K562 (cell line): ENCODE measurements at regions of chr1 and their contacts with region 1.

Region 1: GRCh38 chr1:2801535-2802291 is at the start of gene TTC34:
- DNase-seq: peak; percentile 76 to 90 (median 89)
- ATAC-seq: peak; percentile 99
- H3K4me3 ChIP-seq: no peak within 1 kb of the TSS
- H3K27ac ChIP-seq: no peak within 1 kb of the TSS
- H3K4me1 ChIP-seq: peaks cover 0 to 34% of the 10 kb centered on the region in 2 experiments; a peak in 1 of 5 replicates
- H3K27me3 ChIP-seq: peaks cover 0 to 27% of the 10 kb centered on the region in 2 experiments; a peak in 3 of 5 replicates
- CTCF ChIP-seq: peak; percentile 78 to 90 (median 89)
- EP300 ChIP-seq: no peak
- POLR2A ChIP-seq: no peak
- RAD21 ChIP-seq: peak; percentile 56 to 80; a peak in 3 of 4 replicates
- polyA plus RNA-seq, gene TTC34: not detected

Region 2: GRCh38 chr1:2108213-2108876 is 693.4 kb before region 1 on chr1:
- CTCF ChIA-PET with region 1: no interaction called
- POLR2A ChIA-PET with region 1: no interaction called
- in situ Hi-C with region 1: loop called (anchors 5 kb)
- intact Hi-C with region 1: no loop called
- DNase-seq: peak; percentile 80 to 85 (median 84)
- ATAC-seq: peak; percentile 90
- H3K4me3 ChIP-seq: no peak overlapping the region
- H3K27ac ChIP-seq: no peak overlapping the region
- H3K4me1 ChIP-seq: peaks cover 0 to 58% of the 10 kb centered on the region in 2 experiments; a peak in 3 of 5 replicates
- H3K27me3 ChIP-seq: peaks cover 68 to 97% of the 10 kb centered on the region in 2 experiments; a peak in 4 of 5 replicates
- CTCF ChIP-seq: peak; percentile 68 to 85 (median 72)
- EP300 ChIP-seq: no peak
- POLR2A ChIP-seq: no peak
- RAD21 ChIP-seq: peak in 1 of 2 experiments; percentile 41; a peak in 2 of 4 replicates

Region 3: DNA sequence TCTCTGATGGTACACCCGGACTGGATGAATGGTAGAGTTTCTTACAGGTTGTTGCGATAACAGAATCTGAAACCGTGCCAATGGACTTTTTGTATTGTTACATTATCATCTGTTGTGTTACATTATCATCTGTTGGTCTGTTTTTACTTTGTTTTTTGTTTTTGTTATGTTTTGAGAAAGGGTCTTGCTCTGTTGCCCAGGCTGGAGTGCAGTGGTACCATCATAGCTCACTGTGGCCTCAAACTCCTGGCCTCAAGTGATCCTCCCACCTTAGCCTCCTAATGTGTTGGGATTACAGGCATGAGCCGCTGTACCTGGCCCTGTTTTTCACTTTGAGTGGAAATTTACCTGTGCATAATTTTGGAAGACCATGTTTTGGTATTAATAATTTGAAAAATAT is 379.2 kb before region 1 on chr1:
- CTCF ChIA-PET with region 1: no interaction called
- POLR2A ChIA-PET with region 1: interaction called, 3 read pairs
- in situ Hi-C with region 1: loop called (anchors 5 kb)
- intact Hi-C with region 1: no loop called
- DNase-seq: no peak
- ATAC-seq: no peak
- H3K4me3 ChIP-seq: no peak overlapping the region
- H3K27ac ChIP-seq: no peak overlapping the region
- H3K4me1 ChIP-seq: peaks cover 0 to 29% of the 10 kb centered on the region in 2 experiments; a peak in 2 of 5 replicates
- H3K27me3 ChIP-seq: peaks cover 37 to 60% of the 10 kb centered on the region in 2 experiments; a peak in 4 of 5 replicates
- CTCF ChIP-seq: no peak
- EP300 ChIP-seq: no peak
- POLR2A ChIP-seq: no peak
- RAD21 ChIP-seq: no peak

Region 4: DNA sequence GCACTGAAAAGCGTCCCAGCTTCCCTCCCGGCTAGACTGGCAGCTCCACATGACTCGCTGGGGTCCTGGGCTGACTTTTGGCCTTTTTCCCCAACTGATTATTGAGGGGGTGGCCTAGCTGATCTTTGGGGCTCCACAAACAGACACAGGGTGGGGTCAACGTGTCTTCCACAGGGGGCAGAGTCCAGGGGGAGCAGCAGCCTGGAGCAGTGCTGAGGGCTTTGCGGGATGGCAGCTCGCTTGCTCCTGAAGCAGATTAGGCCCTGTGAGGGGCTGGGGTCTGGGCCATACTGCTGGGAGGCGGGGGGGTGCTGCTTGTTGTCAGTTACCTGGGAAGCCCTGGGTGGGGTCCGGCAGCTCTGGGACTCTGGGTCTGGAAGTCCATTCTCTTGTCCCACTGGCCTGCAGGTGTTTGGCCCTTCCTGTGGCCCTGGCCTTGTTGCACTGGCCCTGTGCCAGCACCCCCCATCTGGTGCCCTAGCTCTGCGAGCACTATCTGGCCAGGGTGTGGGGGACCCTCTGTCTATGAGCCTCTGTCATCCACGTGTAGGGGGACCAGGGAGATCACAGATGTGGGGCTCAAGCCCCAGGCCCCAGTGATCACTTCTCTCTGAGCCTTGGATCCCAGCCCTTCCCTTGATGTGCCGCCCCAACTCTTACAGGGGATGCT is 259.3 kb before region 1 on chr1:
- CTCF ChIA-PET with region 1: no interaction called
- POLR2A ChIA-PET with region 1: no interaction called
- in situ Hi-C with region 1: no loop called
- intact Hi-C with region 1: no loop called
- DNase-seq: no peak
- ATAC-seq: no peak
- H3K4me3 ChIP-seq: no peak overlapping the region
- H3K27ac ChIP-seq: peak overlapping the region; percentile 63
- H3K4me1 ChIP-seq: peaks cover 56 to 86% of the 10 kb centered on the region in 2 experiments
- H3K27me3 ChIP-seq: peaks cover 0 to 9% of the 10 kb centered on the region in 2 experiments; a peak in 2 of 5 replicates
- CTCF ChIP-seq: no peak
- EP300 ChIP-seq: no peak
- POLR2A ChIP-seq: no peak
- RAD21 ChIP-seq: no peak

Region 5: GRCh38 chr1:2566101-2567045 is 235.3 kb before region 1 on chr1:
- CTCF ChIA-PET with region 1: no interaction called
- POLR2A ChIA-PET with region 1: no interaction called
- in situ Hi-C with region 1: no loop called
- intact Hi-C with region 1: no loop called
- DNase-seq: no peak
- ATAC-seq: peak; percentile 13; the same call in 2 of the 3 replicates
- H3K4me3 ChIP-seq: no peak overlapping the region
- H3K27ac ChIP-seq: no peak overlapping the region
- H3K4me1 ChIP-seq: peaks cover 0 to 46% of the 10 kb centered on the region in 2 experiments; a peak in 2 of 5 replicates
- H3K27me3 ChIP-seq: peaks cover 37 to 61% of the 10 kb centered on the region in 2 experiments
- CTCF ChIP-seq: no peak
- EP300 ChIP-seq: no peak
- POLR2A ChIP-seq: no peak
- RAD21 ChIP-seq: no peak

Region 6: GRCh38 chr1:2778220-2778592 is 23.5 kb before region 1 on chr1:
- CTCF ChIA-PET with region 1: no interaction called
- POLR2A ChIA-PET with region 1: no interaction called
- in situ Hi-C with region 1: no loop called
- intact Hi-C with region 1: no loop called
- DNase-seq: no peak
- ATAC-seq: no peak
- H3K4me3 ChIP-seq: no peak overlapping the region
- H3K27ac ChIP-seq: no peak overlapping the region
- H3K4me1 ChIP-seq: no peaks in the 10 kb centered on the region
- H3K27me3 ChIP-seq: no peaks in the 10 kb centered on the region
- CTCF ChIP-seq: no peak
- EP300 ChIP-seq: no peak
- POLR2A ChIP-seq: no peak
- RAD21 ChIP-seq: no peak

Region 7: DNA sequence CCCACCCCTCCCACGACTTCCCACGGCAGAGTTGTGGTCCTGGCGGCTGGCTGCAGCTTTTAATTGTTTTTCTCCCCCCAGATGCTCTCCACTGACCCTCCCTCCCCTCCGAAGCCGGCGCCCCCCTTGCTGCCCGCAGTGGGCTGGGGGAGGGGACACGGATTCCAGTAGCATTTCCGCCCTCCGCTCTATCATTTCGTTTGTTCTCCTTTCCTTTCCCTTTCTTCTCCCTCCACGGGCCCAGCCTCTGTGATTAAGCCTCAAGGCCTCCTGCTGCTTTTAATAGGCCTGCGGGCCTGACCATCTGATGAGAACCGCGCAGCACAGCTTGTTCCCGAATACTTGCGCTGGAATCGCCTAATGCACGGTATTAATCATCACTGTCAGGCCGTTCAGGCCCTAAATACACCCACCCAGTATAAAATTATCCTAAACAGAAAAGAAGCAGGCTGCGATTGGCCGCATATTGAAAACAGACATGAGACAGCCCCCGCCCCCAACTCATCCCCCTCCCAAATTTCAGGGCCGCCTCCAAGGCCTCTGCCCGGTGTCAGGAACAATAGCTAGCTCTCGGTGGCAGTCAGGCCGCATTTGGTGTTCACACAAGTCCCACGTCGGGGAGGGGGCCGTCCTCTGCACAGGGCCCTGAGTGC is 550.7 kb after region 1 on chr1:
- CTCF ChIA-PET with region 1: no interaction called
- POLR2A ChIA-PET with region 1: no interaction called
- in situ Hi-C with region 1: no loop called
- intact Hi-C with region 1: no loop called
- DNase-seq: no peak
- ATAC-seq: no peak
- H3K4me3 ChIP-seq: no peak overlapping the region
- H3K27ac ChIP-seq: no peak overlapping the region
- H3K4me1 ChIP-seq: peaks cover 6 to 18% of the 10 kb centered on the region in 2 experiments; a peak in 2 of 5 replicates
- H3K27me3 ChIP-seq: peaks cover 6 to 42% of the 10 kb centered on the region in 2 experiments; a peak in 3 of 5 replicates
- CTCF ChIP-seq: no peak
- EP300 ChIP-seq: no peak
- POLR2A ChIP-seq: no peak
- RAD21 ChIP-seq: no peak